GM13977 (cell line): ENCODE measurements at regions of chrX and their contacts with region 1.

Region 1: DNA sequence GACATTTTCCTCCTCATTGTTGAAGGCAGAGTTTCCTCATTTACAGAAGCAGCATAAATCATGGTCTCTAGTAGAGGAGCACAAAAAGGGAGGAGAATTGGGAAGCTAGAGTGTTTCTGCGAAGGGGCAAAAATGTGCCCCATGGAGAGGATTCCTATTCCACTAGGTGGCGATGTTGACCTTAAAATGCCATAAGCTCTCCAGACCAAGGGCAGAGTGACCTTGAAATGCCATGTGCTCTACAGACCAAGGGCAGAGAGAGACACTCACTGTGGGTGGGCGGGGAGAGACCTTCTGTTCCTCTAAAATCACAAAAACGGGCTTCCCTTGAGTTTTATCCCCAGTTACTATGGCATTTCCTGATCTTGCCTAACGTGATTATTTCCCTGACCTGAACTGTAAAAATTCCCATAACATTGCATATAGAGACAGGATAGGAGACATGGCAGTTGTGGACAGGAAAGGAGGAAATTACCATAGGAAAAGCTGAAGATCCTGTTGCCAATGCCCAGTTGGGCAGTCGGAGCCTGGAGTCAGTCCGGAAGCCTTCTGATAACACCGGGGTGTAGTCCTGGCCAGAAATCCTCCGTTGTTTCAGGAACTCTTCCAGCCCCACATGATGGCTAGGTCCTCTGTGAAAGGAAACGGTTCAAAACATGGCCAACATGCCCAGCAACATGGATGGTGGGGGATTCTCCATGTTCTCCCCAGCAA is 567.7 kb downstream of the MAGEB5 start:
- DNase-seq: no peak
- CTCF ChIP-seq: peak; percentile 74

Region 2: GRCh38 chrX:27186664-27187063 is 403.0 kb after region 1 on chrX:
- in situ Hi-C with region 1: loop called (anchors 25 kb)
- DNase-seq: peak; percentile 27
- CTCF ChIP-seq: peak; percentile 87

Region 3: GRCh38 chrX:28347476-28347875 is 1563.8 kb after region 1 on chrX:
- in situ Hi-C with region 1: no loop called
- DNase-seq: no peak
- CTCF ChIP-seq: no peak